ENCODE measurements at regions of chr1 and their contacts with region 1.

Region 1: GRCh38 chr1:71231751-71232150 is 150.9 kb upstream of the ZRANB2 start:
- DNase-seq: no peak
- ATAC-seq: no peak
- H3K4me3 ChIP-seq: no peak overlapping the region
- H3K27ac ChIP-seq: no peak overlapping the region
- H3K4me1 ChIP-seq: no peaks in the 10 kb centered on the region
- H3K27me3 ChIP-seq: no peaks in the 10 kb centered on the region
- CTCF ChIP-seq: no peak
- EP300 ChIP-seq: no peak
- POLR2A ChIP-seq: no peak
- RAD21 ChIP-seq: no peak

Region 2: DNA sequence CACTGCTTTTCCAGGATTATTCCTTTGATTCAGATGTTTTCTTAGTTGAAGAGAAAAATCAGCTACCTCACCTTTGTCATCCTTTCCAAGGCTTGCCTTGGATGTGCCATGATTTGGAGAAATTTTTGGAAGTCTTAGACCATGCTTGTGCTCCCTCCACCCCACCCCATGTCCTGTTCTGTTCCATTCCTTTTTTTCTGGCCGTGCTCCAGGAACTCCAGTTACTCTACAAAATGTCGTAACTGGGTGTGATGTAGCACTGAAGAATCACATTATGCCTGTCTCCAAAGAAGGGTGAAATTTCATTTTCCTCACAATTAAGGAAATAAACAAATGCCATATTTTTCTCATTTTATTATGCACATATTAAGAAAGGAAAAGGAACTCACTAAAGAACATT is 66.9 kb after region 1 on chr1:
- CTCF ChIA-PET with region 1: no interaction called
- POLR2A ChIA-PET with region 1: no interaction called
- in situ Hi-C with region 1: loop called (anchors 10 kb)
- intact Hi-C with region 1: no loop called
- DNase-seq: no peak
- ATAC-seq: no peak
- H3K4me3 ChIP-seq: no peak overlapping the region
- H3K27ac ChIP-seq: no peak overlapping the region
- H3K4me1 ChIP-seq: no peaks in the 10 kb centered on the region
- H3K27me3 ChIP-seq: no peaks in the 10 kb centered on the region
- CTCF ChIP-seq: no peak
- EP300 ChIP-seq: no peak
- POLR2A ChIP-seq: no peak
- RAD21 ChIP-seq: no peak